ENCODE measurements at regions of chr12 and their contacts with region 1.

Region 1: GRCh38 chr12:56189176-56189917 is at the start of gene SMARCC2:
- DNase-seq: peak; percentile 75 to 92
- H3K4me3 ChIP-seq: peak within 1 kb of the TSS; percentile 82 to 95 (median 90)
- H3K27ac ChIP-seq: peak within 1 kb of the TSS; percentile 81
- H3K4me1 ChIP-seq: peaks cover 2 to 8% (median 4%) of the 10 kb centered on the region in 4 experiments; a peak in 3 of 7 replicates
- H3K27me3 ChIP-seq: no peaks in the 10 kb centered on the region
- CTCF ChIP-seq: peak; percentile 75 to 96 (median 84)
- EP300 ChIP-seq: peak in 1 of 2 experiments; percentile 26; a peak in 1 of 3 replicates
- POLR2A ChIP-seq: peak; percentile 24 to 65
- RAD21 ChIP-seq: peak; percentile 26 to 48; a peak in 3 of 4 replicates
- total RNA-seq, gene SMARCC2: 66.3 and 78.5 TPM in 2 replicates

Region 2: DNA sequence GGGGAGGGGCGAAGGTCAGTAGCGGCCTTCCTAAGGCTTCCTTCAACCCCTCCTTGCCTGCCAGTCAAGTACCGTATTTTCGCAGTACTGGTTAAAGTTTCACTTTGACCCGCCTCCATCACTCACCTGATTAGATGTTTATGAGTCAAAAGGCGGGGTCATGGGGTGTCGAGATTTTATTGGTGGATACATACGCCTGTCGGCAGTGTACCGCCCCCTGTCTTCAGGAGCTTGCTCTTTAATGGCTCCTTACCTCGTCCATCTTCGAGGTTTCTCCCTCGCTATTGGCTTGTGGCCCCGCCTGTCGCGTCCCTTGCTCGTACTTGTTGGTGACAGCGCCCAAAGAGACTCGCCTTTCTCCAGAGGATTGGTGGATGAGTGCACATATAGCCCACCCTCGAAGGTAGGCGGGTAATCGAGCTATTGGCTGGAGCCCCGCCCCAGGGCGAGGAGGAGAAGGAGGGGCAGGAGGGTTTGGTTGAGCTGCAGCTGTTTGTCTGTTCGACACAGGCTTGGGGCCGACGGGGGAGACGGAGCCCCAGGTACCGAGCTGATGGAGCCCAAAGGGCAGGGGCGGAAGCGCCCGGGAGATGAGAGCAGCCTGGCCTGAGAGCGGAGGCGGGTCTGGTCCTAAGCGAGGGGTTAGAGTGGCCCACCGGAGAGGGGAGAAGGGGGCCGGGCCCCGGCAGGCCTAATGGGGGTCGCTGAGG is 215.6 kb before region 1 on chr12 and contains the start of gene RAB5B:
- CTCF ChIA-PET with region 1: no interaction called
- POLR2A ChIA-PET with region 1: no interaction called
- DNase-seq: peak; percentile 94 to 100
- H3K4me3 ChIP-seq: peak within 1 kb of the TSS; percentile 65 to 93 (median 88)
- H3K27ac ChIP-seq: peak within 1 kb of the TSS; percentile 12; the same call in 1 of the 2 replicates
- H3K4me1 ChIP-seq: peaks cover 0 to 4% (median 1%) of the 10 kb centered on the region in 4 experiments; a peak in 4 of 7 replicates
- H3K27me3 ChIP-seq: no peaks in the 10 kb centered on the region
- CTCF ChIP-seq: no peak
- EP300 ChIP-seq: no peak
- POLR2A ChIP-seq: peak; percentile 88 to 93
- RAD21 ChIP-seq: no peak
- total RNA-seq, gene RAB5B: 56.7 and 65.6 TPM in 2 replicates

Region 3: GRCh38 chr12:56127888-56128669 is 61.3 kb before region 1 on chr12 and contains the start of gene ESYT1:
- CTCF ChIA-PET with region 1: interaction called, 21 read pairs
- POLR2A ChIA-PET with region 1: no interaction called
- DNase-seq: peak; percentile 97 to 100
- H3K4me3 ChIP-seq: peak within 1 kb of the TSS; percentile 79 to 95 (median 90)
- H3K27ac ChIP-seq: peak within 1 kb of the TSS; percentile 88
- H3K4me1 ChIP-seq: peaks cover 0 to 13% (median 5%) of the 10 kb centered on the region in 4 experiments; a peak in 5 of 7 replicates
- H3K27me3 ChIP-seq: no peaks in the 10 kb centered on the region
- CTCF ChIP-seq: no peak
- EP300 ChIP-seq: peak in 1 of 2 experiments; percentile 57; a peak in 1 of 3 replicates
- POLR2A ChIP-seq: peak; percentile 93 to 96
- RAD21 ChIP-seq: no peak; a peak in 1 of 4 replicates
- total RNA-seq, gene ESYT1: 85.1 and 86.9 TPM in 2 replicates

Region 4: DNA sequence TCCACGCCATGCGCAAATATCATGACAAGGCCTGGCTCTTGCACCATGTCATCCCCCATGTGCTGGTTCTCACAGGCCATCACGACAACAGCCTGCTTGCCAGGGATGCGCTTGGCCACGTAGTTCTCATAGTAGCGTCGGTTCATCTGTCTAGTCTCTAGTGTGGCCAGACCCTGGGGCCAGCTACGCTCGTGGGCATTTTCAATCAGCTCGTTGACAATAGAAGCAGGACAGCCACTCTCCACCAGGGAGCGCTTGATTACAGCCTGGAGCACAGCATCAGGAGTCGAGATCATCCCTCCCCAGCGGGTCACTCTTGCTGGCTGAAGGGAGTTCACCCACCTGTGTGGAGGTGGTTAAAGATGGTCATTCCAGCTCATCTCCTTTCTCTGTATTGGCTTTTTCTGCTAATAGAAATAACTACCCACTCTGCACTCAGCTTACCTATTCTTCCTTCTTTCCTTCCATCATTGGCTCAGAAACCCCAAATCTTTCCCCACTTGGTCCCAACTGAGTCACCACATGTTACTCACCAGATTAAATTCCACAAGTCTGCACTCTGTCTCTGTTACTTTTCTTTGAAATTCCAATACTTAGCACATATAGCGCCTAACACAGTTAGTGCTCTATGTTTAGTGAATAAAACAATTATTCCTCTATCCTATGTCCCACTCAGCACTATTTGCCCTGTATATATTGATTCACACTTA is 17.3 kb after region 1 on chr12:
- CTCF ChIA-PET with region 1: interaction called, 111 read pairs
- POLR2A ChIA-PET with region 1: interaction called, 70 read pairs
- DNase-seq: peak in 1 of 2 experiments; percentile 84
- H3K4me3 ChIP-seq: no peak overlapping the region
- H3K27ac ChIP-seq: no peak overlapping the region
- H3K4me1 ChIP-seq: no peaks in the 10 kb centered on the region
- H3K27me3 ChIP-seq: no peaks in the 10 kb centered on the region
- CTCF ChIP-seq: peak; percentile 78 to 91 (median 85)
- EP300 ChIP-seq: no peak
- POLR2A ChIP-seq: 0 out of 3 replicates have a peak, but pooled peaks of 1 of the 2 experiments have one; percentile 5
- RAD21 ChIP-seq: peak; percentile 68 to 74

Region 5: DNA sequence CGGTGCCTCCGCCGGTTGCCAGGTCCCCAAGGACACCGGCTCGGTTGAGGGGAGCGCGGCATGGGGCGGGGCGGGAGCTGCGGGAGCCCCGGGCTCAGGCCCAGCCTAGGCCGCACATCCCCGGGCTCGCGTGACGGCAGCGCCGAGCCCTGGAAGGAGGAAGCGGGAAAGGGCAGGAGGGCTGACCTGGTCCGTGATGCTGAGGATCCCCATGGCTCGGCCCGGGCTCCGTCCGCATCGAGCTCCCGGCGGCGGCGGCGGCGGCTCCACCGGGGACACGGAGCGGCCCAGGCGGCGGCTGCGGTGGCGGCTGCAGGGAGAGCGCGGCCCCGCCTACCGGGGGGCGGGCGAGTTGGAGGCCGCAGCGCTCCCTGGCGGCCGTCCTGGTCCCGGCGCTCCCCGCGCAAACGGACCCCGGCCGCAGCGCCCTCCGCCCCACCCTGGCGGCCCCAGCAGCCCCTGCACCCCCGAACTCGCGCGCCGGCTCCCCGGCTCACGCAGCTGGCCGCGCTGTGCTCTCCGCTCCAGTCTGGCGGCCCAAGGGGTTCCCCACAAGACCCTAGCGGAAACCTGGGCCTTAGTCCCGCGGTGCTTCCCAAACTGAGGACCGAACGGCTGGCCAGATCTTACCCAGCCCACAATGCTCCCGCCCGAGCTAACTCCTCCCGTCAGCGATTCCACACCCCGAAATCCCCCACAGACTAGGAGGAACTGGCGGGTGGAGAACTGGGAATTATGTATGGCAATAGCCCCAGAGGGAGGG is 68.9 kb after region 1 on chr12 and contains the start of gene ANKRD52:
- CTCF ChIA-PET with region 1: interaction called, 47 read pairs
- POLR2A ChIA-PET with region 1: interaction called, 13 read pairs
- DNase-seq: peak in 1 of 2 experiments; percentile 89
- H3K4me3 ChIP-seq: peak within 1 kb of the TSS; percentile 60 to 96 (median 88)
- H3K27ac ChIP-seq: no peak within 1 kb of the TSS
- H3K4me1 ChIP-seq: peaks cover 8 to 17% (median 13%) of the 10 kb centered on the region in 4 experiments
- H3K27me3 ChIP-seq: no peaks in the 10 kb centered on the region
- CTCF ChIP-seq: peak; percentile 67 to 97 (median 83)
- EP300 ChIP-seq: peak in 1 of 2 experiments; percentile 23; a peak in 1 of 3 replicates
- POLR2A ChIP-seq: peak in 1 of 2 experiments; percentile 28; a peak in 2 of 3 replicates
- RAD21 ChIP-seq: peak in 1 of 2 experiments; percentile 38; a peak in 2 of 4 replicates
- total RNA-seq, gene ANKRD52: 34.1 and 36.3 TPM in 2 replicates